CD8-positive, alpha-beta T cell (primary cell): ENCODE measurements at regions of chr1 and their contacts with region 1.

Region 1: GRCh38 chr1:179744401-179745130 is 1.5 kb downstream of the FAM163A start:
- DNase-seq: no peak
- ATAC-seq: no peak
- H3K4me3 ChIP-seq: no peak overlapping the region
- H3K4me3 Mint-ChIP-seq: no peak overlapping the region
- H3K27ac ChIP-seq: no peak overlapping the region
- H3K27ac Mint-ChIP-seq: no peak overlapping the region
- H3K4me1 ChIP-seq: peaks cover 5% of the 10 kb centered on the region
- H3K4me1 Mint-ChIP-seq: peaks cover 9% of the 10 kb centered on the region
- H3K27me3 ChIP-seq: peaks cover 0 to 18% of the 10 kb centered on the region in 2 experiments
- H3K27me3 Mint-ChIP-seq: peaks cover 70% of the 10 kb centered on the region
- CTCF ChIP-seq: no peak

Region 2: DNA sequence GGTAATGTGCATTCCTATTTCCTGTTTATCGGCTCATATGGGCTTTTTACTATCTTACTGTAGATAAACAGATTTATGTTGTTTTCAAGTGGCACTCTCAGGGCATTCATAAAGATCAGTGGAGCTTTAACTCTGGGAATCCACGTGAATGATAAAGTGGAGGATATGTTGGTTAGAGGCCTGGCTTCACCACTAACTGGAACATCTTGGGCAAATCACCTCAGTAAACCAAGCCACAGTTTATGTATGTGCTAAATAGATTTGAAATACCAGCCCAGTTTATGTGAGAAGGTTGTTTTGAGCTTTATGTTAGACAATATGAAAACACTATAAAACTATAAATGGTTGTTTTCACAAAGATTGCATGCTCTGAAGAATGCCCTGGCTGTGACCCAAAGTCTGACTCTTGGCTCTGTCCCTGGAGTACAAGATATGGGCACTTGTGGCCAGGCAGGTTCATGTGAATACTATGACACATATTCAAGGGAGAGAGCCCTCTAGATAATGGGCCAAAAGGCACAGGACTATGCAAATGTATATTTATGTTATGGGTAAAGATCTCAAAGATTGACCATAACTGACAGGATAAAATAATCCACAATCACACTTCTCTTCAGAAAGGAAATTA is 35.2 kb after region 1 on chr1:
- CTCF ChIA-PET with region 1: no interaction called
- POLR2A ChIA-PET with region 1: no interaction called
- intact Hi-C with region 1: no loop called
- DNase-seq: no peak
- ATAC-seq: no peak
- H3K4me3 ChIP-seq: no peak overlapping the region
- H3K4me3 Mint-ChIP-seq: no peak overlapping the region
- H3K27ac ChIP-seq: no peak overlapping the region
- H3K27ac Mint-ChIP-seq: no peak overlapping the region
- H3K4me1 ChIP-seq: no peaks in the 10 kb centered on the region
- H3K4me1 Mint-ChIP-seq: no peaks in the 10 kb centered on the region
- H3K27me3 ChIP-seq: no peaks in the 10 kb centered on the region
- H3K27me3 Mint-ChIP-seq: peaks cover 3% of the 10 kb centered on the region
- CTCF ChIP-seq: no peak

Region 3: GRCh38 chr1:180728472-180729106 is 984.0 kb after region 1 on chr1:
- CTCF ChIA-PET with region 1: no interaction called
- POLR2A ChIA-PET with region 1: no interaction called
- intact Hi-C with region 1: loop called in 1 of 2 experiments (anchors 5 kb)
- DNase-seq: no peak
- ATAC-seq: no peak
- H3K4me3 ChIP-seq: no peak overlapping the region
- H3K4me3 Mint-ChIP-seq: no peak overlapping the region
- H3K27ac ChIP-seq: no peak overlapping the region
- H3K27ac Mint-ChIP-seq: no peak overlapping the region
- H3K4me1 ChIP-seq: no peaks in the 10 kb centered on the region
- H3K4me1 Mint-ChIP-seq: no peaks in the 10 kb centered on the region
- H3K27me3 ChIP-seq: no peaks in the 10 kb centered on the region
- H3K27me3 Mint-ChIP-seq: no peaks in the 10 kb centered on the region
- CTCF ChIP-seq: no peak